ENCODE measurements at regions of chr16 and their contacts with region 1.

Region 1: GRCh38 chr16:35449663-35450062 is 1990.3 kb downstream of the TP53TG3F start:
- DNase-seq: no peak
- ATAC-seq: no peak
- H3K4me3 ChIP-seq: no peak overlapping the region
- H3K4me3 Mint-ChIP-seq: no peak overlapping the region
- H3K27ac ChIP-seq: no peak overlapping the region
- H3K27ac Mint-ChIP-seq: no peak overlapping the region
- H3K4me1 ChIP-seq: no peaks in the 10 kb centered on the region
- H3K4me1 Mint-ChIP-seq: no peaks in the 10 kb centered on the region
- H3K27me3 ChIP-seq: no peaks in the 10 kb centered on the region
- H3K27me3 Mint-ChIP-seq: no peaks in the 10 kb centered on the region
- CTCF ChIP-seq: no peak

Region 2: GRCh38 chr16:35463358-35463757 is 13.7 kb after region 1 on chr16:
- CTCF ChIA-PET with region 1: no interaction called
- POLR2A ChIA-PET with region 1: no interaction called
- intact Hi-C with region 1: no loop called
- DNase-seq: no peak
- ATAC-seq: no peak
- H3K4me3 ChIP-seq: no peak overlapping the region
- H3K4me3 Mint-ChIP-seq: no peak overlapping the region
- H3K27ac ChIP-seq: no peak overlapping the region
- H3K27ac Mint-ChIP-seq: no peak overlapping the region
- H3K4me1 ChIP-seq: no peaks in the 10 kb centered on the region
- H3K4me1 Mint-ChIP-seq: no peaks in the 10 kb centered on the region
- H3K27me3 ChIP-seq: no peaks in the 10 kb centered on the region
- H3K27me3 Mint-ChIP-seq: no peaks in the 10 kb centered on the region
- CTCF ChIP-seq: no peak

Region 3: GRCh38 chr16:35516551-35516950 is 66.9 kb after region 1 on chr16:
- CTCF ChIA-PET with region 1: no interaction called
- POLR2A ChIA-PET with region 1: no interaction called
- intact Hi-C with region 1: loop called in 1 of 2 experiments (anchors 10 kb)
- DNase-seq: no peak
- ATAC-seq: no peak
- H3K4me3 ChIP-seq: no peak overlapping the region
- H3K4me3 Mint-ChIP-seq: no peak overlapping the region
- H3K27ac ChIP-seq: no peak overlapping the region
- H3K27ac Mint-ChIP-seq: no peak overlapping the region
- H3K4me1 ChIP-seq: no peaks in the 10 kb centered on the region
- H3K4me1 Mint-ChIP-seq: no peaks in the 10 kb centered on the region
- H3K27me3 ChIP-seq: no peaks in the 10 kb centered on the region
- H3K27me3 Mint-ChIP-seq: no peaks in the 10 kb centered on the region
- CTCF ChIP-seq: no peak

Measured in CD4-positive, alpha-beta T cell (primary cell).